Naive thymus-derived CD4-positive, alpha-beta T cell (primary cell): ENCODE measurements at regions of chr2 and their contacts with region 1.

Region 1: GRCh38 chr2:225668606-225669266 is 269.2 kb downstream of the NYAP2 start:
- DNase-seq: peak in 7 of 9 donors; percentile 8 to 57 (median 50)
- ATAC-seq: peak; percentile 81
- H3K4me3 ChIP-seq: no peak overlapping the region
- H3K4me3 Mint-ChIP-seq: no peak overlapping the region
- H3K27ac ChIP-seq: no peak overlapping the region
- H3K27ac Mint-ChIP-seq: no peak overlapping the region
- H3K4me1 ChIP-seq: no peaks in the 10 kb centered on the region
- H3K4me1 Mint-ChIP-seq: no peaks in the 10 kb centered on the region
- H3K27me3 ChIP-seq: no peaks in the 10 kb centered on the region
- H3K27me3 Mint-ChIP-seq: peaks cover 4 to 8% (median 7%) of the 10 kb centered on the region in 5 donors

Region 2: GRCh38 chr2:226984750-226985582 is 1316.2 kb after region 1 on chr2:
- CTCF ChIA-PET with region 1: no interaction called
- POLR2A ChIA-PET with region 1: no interaction called
- intact Hi-C with region 1: loop called (anchors 1 kb)
- DNase-seq: peak in 6 of 9 donors; percentile 9 to 48 (median 38)
- ATAC-seq: peak; percentile 58
- H3K4me3 ChIP-seq: no peak overlapping the region
- H3K4me3 Mint-ChIP-seq: peak overlapping the region in 3 of 10 donors; percentile 16 to 45 (median 20)
- H3K27ac ChIP-seq: no peak overlapping the region
- H3K27ac Mint-ChIP-seq: peak overlapping the region in 6 of 9 donors; percentile 22 to 76 (median 66)
- H3K4me1 ChIP-seq: peaks cover 0 to 7% of the 10 kb centered on the region in 2 donors
- H3K4me1 Mint-ChIP-seq: peaks cover 5 to 33% (median 26%) of the 10 kb centered on the region in 7 donors
- H3K27me3 ChIP-seq: no peaks in the 10 kb centered on the region
- H3K27me3 Mint-ChIP-seq: no peaks in the 10 kb centered on the region

Region 3: GRCh38 chr2:227106845-227107759 is 1438.4 kb after region 1 on chr2:
- CTCF ChIA-PET with region 1: no interaction called
- POLR2A ChIA-PET with region 1: no interaction called
- intact Hi-C with region 1: loop called (anchors 1 kb)
- DNase-seq: peak in 5 of 9 donors; percentile 4 to 26 (median 14)
- ATAC-seq: peak; percentile 50
- H3K4me3 ChIP-seq: no peak overlapping the region
- H3K4me3 Mint-ChIP-seq: no peak overlapping the region
- H3K27ac ChIP-seq: no peak overlapping the region
- H3K27ac Mint-ChIP-seq: no peak overlapping the region
- H3K4me1 ChIP-seq: no peaks in the 10 kb centered on the region
- H3K4me1 Mint-ChIP-seq: no peaks in the 10 kb centered on the region
- H3K27me3 ChIP-seq: no peaks in the 10 kb centered on the region
- H3K27me3 Mint-ChIP-seq: peaks cover 0 to 7% (median 0%) of the 10 kb centered on the region in 5 donors

Region 4: DNA sequence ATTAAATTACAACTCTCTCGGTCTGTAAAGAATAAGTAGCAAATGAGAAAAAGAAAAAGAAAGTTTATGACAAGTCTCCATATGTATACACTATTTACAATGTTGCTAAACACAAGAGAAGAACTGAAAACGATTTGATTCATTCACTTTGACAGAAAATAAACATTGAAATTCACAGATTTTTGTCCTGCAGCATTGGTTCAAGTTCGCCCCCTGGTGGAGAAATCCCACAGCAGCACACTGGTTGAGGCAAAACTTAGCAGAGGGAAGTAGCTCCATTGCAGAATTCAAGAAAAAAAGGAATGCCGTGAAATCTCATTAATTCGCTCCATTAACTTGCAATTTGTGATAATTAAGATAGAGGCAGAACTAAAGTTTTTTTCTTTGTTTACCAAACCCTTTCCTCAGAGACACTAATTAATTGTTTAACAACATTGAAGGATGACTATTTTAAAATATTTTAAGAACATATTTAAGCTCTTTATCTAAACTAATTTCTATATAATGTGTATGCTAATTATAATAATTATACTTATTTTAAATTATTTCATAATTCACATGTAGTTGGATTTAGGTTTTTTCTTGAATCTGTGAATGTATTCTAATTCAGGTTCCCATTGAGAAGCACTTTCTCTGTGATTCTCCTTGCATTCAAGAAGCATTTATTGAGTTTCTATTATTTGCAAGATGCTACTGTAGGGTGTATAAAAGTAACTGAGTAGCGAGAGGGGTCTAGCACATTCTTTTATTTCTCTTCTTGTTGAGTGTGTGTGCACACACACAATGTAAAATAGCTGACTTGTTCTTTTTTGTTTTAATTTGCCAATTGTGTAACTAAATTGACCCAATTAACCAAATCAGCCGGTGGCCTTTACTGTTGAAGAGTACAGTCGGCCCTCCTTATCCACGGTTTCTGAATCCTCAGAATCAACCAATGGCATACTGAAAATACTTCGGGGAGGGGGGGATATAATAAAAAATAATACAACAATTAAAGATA is 1569.8 kb after region 1 on chr2:
- CTCF ChIA-PET with region 1: interaction called, 7 read pairs
- POLR2A ChIA-PET with region 1: no interaction called
- intact Hi-C with region 1: loop called (anchors 1 kb)
- DNase-seq: peak; percentile 2 to 58 (median 41)
- ATAC-seq: peak; percentile 47
- H3K4me3 ChIP-seq: no peak overlapping the region
- H3K4me3 Mint-ChIP-seq: no peak overlapping the region
- H3K27ac ChIP-seq: no peak overlapping the region
- H3K27ac Mint-ChIP-seq: no peak overlapping the region
- H3K4me1 ChIP-seq: no peaks in the 10 kb centered on the region
- H3K4me1 Mint-ChIP-seq: no peaks in the 10 kb centered on the region
- H3K27me3 ChIP-seq: no peaks in the 10 kb centered on the region
- H3K27me3 Mint-ChIP-seq: peaks cover 5 to 16% (median 13%) of the 10 kb centered on the region in 5 donors

Region 5: DNA sequence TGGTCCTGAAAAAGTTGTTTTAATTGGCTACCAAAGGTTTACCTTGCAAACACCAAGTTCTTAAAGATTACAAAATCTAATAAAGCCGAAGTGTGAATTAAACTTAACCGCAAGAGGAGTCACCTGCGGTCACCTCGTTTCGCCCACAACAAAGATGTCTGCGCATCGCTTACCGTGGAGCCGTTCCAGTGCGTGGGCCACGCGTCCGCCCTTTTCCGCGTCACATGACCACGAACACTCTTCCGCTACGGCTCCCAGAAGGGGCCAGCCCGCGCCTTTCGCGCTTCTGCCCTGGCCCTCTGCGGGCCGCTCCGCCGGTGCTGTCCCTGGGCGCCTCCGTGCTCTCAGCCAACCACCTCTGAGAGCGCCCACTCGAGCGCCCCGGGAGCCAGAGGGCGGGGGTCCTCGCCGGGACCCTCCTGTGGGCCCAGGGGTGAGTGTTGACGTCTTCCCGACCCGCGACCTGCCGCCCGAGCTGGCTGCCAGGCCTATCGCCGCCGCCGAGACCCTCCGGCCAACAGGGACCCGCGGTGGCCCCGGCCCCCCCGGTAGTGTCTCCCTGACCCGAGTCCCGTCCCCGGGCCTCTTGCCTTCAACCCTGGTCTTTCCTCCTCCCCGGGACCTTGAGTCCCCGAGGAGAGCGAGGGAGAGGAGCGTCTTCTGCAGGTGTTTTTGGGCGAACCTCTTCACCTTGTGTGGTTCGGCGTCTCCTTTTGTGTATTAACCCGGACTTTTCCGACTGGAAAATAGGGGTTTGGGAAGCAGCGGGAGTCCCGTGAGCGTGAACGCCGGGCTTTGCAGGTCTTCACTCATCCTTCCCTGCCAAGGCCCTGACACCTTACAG is 1656.5 kb after region 1 on chr2 and contains the start of gene MFF:
- CTCF ChIA-PET with region 1: no interaction called
- POLR2A ChIA-PET with region 1: no interaction called
- intact Hi-C with region 1: loop called in 1 of 2 experiments (anchors 5 kb)
- DNase-seq: peak; percentile 82 to 93 (median 93)
- ATAC-seq: peak; percentile 99
- H3K4me3 ChIP-seq: peak within 1 kb of the TSS; percentile 76
- H3K4me3 Mint-ChIP-seq: peak within 1 kb of the TSS; percentile 91 to 97 (median 96)
- H3K27ac ChIP-seq: peak within 1 kb of the TSS; percentile 92
- H3K27ac Mint-ChIP-seq: peak within 1 kb of the TSS; percentile 83 to 97 (median 95)
- H3K4me1 ChIP-seq: peaks cover 4 to 24% of the 10 kb centered on the region in 2 donors
- H3K4me1 Mint-ChIP-seq: peaks cover 8 to 59% (median 46%) of the 10 kb centered on the region in 7 donors
- H3K27me3 ChIP-seq: no peaks in the 10 kb centered on the region
- H3K27me3 Mint-ChIP-seq: peaks cover 0 to 13% (median 0%) of the 10 kb centered on the region in 5 donors
- total RNA-seq, gene MFF: 51.7 to 64.7 (median 61.8) TPM